K562 (cell line): ENCODE measurements at regions of chr9 and their contacts with region 1.

Region 1: GRCh38 chr9:136143216-136144001 is 24.7 kb upstream of the TMEM250 start:
- DNase-seq: peak; percentile 50 to 76 (median 60)
- ATAC-seq: peak; percentile 89
- H3K4me3 ChIP-seq: no peak overlapping the region
- H3K27ac ChIP-seq: no peak overlapping the region
- H3K4me1 ChIP-seq: peaks cover 0 to 38% of the 10 kb centered on the region in 2 experiments; a peak in 2 of 5 replicates
- H3K27me3 ChIP-seq: peaks cover 24 to 45% of the 10 kb centered on the region in 2 experiments; a peak in 4 of 5 replicates
- CTCF ChIP-seq: peak; percentile 72 to 77 (median 75)
- EP300 ChIP-seq: no peak
- POLR2A ChIP-seq: no peak
- RAD21 ChIP-seq: peak; percentile 54 to 82

Region 2: DNA sequence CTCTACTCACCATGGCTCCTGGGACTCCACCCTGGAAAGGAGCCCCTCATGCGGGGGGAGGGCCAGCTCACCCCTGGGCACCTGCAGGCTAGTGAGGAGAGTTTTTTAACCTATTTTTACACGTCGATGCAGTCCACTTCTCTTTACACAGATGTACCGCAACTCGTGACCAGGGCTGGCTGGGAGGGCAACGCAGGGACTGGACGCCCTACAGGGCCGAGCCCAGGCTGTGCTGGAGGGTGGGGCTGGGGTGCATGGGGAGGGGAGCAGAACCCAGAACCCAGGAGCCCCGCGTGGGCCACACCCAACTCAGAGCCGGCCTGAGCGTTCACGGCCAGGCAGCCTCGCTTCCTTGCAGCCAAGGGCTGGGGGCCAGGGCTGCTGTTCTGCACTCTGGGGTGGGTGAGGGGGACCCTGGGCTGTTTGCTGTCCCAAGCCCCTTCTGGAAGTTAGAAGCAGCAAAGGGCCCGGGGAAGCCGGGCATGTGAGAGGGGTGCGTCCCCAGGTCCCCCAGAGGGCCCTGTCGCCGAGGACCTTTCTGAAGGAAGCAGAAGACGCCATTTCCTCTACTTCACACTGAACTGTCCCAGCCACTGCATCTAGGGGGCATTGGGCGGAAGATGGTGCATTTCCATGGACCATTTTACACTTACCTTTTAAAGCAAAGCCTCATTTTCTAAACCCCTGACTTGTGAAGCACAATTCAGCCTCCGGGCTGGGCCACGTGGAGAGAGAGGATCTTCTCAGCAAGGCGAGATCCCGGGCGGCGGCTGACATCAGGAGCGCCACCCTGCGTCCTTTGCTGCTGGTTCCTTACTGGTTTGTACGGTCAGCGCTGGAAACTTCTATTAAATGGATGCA is 350.9 kb before region 1 on chr9:
- CTCF ChIA-PET with region 1: no interaction called
- POLR2A ChIA-PET with region 1: no interaction called
- in situ Hi-C with region 1: no loop called
- intact Hi-C with region 1: loop called (anchors 5 kb)
- DNase-seq: peak; percentile 65 to 71 (median 67)
- ATAC-seq: peak; percentile 73
- H3K4me3 ChIP-seq: no peak overlapping the region
- H3K27ac ChIP-seq: no peak overlapping the region
- H3K4me1 ChIP-seq: peaks cover 3 to 63% of the 10 kb centered on the region in 2 experiments; a peak in 3 of 5 replicates
- H3K27me3 ChIP-seq: peaks cover 31 to 73% of the 10 kb centered on the region in 2 experiments
- CTCF ChIP-seq: peak; percentile 58 to 74 (median 61)
- EP300 ChIP-seq: no peak
- POLR2A ChIP-seq: no peak
- RAD21 ChIP-seq: peak in 1 of 2 experiments; percentile 63; a peak in 2 of 4 replicates

Region 3: DNA sequence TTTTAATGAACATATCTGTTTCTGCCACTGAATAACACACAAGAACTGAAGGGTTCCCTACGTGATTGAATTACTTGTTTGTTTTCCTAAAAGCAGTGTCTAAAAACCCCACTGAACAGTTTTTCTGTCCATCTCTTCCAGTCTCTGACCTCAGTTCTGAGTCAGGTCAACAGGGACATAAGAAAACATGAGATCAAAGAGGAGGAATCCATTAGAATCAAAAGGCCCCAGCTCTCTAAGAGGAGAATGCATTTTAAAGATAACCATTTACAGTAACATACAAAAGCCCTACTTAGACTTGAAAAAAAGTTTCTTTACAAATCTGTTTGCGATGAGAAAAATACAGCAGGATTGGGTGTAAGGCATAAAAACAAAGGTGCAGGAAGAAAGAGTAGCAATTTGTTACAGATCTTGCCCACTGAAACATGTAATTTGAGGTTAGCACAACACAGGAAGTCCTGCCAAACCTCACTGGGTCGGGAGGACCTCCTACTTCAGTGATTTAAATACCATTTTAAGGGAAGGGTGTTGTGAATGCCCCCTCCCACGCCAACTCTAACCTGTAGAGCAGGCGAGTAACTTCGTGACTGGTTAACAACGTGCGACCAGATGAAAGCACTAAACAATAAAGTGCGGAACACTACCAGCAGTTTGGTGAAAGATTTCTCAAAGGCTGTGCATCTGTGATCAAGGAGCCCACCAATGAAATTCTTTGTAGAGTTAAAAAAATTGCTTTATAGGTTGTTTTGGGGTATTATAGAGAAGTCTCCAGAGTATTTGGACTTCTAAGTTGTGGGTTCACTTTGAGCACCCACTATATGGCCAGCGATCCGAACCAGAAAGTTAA is 100.9 kb after region 1 on chr9:
- CTCF ChIA-PET with region 1: no interaction called
- POLR2A ChIA-PET with region 1: no interaction called
- in situ Hi-C with region 1: no loop called
- intact Hi-C with region 1: no loop called
- DNase-seq: peak in 1 of 4 experiments; percentile 35
- ATAC-seq: no peak; the same call in 2 of the 3 replicates
- H3K4me3 ChIP-seq: peak overlapping the region; percentile 75
- H3K27ac ChIP-seq: peak overlapping the region; percentile 77
- H3K4me1 ChIP-seq: peaks cover 37 to 58% of the 10 kb centered on the region in 2 experiments
- H3K27me3 ChIP-seq: peaks cover under 1 to 26% of the 10 kb centered on the region in 2 experiments; a peak in 2 of 5 replicates
- CTCF ChIP-seq: no peak
- EP300 ChIP-seq: no peak
- POLR2A ChIP-seq: no peak
- RAD21 ChIP-seq: no peak

Region 4: DNA sequence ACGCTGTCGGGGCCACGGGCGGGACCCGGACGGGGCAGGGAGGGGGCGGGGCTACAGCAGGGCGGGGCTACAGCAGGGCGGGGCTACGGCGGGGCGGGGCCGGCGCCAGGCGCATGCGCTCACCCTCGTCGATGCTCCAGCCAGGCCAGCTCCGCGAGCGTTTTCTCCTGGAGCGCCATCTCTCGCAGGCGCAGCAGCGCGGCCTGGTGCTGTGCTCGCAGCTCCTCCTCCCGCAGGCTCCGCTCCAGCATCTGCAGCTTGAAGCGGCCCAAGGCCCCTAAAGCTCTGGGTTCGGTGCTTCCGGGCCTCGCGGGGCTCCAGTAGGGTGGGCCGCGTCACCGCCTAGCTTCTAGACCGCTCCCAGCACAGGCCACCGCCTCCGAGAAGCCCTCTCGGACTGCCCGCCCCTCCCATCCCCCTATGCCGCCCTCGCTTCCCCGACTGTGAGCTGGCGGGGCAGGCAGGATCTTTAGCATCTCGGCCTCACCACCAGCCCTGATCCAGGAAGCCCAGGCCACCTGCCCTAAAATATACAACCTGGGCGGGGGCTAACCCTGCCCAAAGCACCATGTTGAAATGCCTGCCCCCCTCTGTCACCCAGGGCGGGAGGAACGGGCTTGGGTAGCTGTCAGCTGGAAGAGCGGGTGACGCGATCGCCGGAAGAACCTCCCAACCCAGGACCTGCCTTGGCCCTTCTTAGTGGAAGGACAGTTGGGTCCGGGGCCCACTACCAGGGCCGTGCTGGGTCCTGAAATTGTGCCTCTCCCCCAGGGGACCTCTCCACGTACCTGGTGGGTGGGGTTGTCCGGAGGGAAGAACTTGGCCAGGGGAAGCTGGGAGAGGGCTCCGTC is 124.1 kb after region 1 on chr9:
- CTCF ChIA-PET with region 1: interaction called, 3 read pairs
- POLR2A ChIA-PET with region 1: no interaction called
- in situ Hi-C with region 1: no loop called
- intact Hi-C with region 1: loop called (anchors 5 kb)
- DNase-seq: peak; percentile 88 to 100 (median 99)
- ATAC-seq: peak; percentile 97
- H3K4me3 ChIP-seq: peak overlapping the region; percentile 37
- H3K27ac ChIP-seq: no peak overlapping the region
- H3K4me1 ChIP-seq: peaks cover 0 to 29% of the 10 kb centered on the region in 2 experiments; a peak in 3 of 5 replicates
- H3K27me3 ChIP-seq: peaks cover 16 to 35% of the 10 kb centered on the region in 2 experiments
- CTCF ChIP-seq: peak; percentile 44 to 76 (median 66)
- EP300 ChIP-seq: no peak
- POLR2A ChIP-seq: no peak
- RAD21 ChIP-seq: peak; percentile 40 to 72

Region 5: DNA sequence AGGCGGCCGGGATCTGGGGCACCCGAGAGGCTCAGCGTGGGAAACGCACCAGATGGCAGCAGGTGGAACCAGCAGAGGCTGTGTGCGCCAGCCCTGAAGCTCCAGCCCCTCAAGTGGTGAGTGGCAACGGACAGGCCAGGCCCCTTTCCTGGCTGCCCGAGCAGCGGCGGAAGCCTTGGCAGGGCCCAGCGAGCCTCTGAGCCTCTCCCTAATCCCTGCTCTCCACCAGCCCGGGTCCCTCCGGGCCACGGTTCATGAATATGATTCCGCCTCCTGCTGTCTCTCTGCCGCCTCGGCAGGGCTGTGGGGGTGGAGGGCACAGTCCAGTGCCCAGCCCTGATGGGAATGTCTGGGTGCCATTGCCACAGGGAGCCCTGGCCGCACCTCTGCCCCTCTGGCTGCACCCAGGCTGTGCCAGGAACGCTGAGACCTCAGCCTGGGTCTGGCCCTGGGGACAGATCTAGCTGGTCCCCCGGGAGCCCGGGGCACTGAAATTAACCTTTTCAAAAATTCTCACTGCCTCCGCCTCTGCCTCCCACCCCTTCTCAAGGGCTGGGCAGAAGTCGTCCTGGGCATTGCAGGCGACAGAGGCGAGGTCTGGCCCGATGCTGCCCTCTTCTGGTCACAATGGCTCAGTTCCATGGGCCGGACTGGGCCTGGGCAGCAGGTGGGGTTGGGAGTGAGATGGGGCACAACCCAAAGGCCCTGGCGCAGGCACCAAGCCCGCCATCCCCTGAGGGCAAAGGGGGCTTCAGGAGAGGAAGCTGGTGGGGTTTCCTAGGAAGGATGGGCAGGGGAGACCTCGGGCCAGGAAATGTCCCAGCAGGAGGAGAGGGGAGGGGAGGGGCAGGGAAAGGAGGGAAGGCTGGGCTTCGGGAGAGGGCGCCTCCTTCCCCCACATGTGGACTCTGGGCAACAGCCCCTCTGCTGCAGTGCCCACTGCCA is 140.2 kb after region 1 on chr9:
- CTCF ChIA-PET with region 1: interaction called, 10 read pairs
- POLR2A ChIA-PET with region 1: interaction called, 3 read pairs
- in situ Hi-C with region 1: no loop called
- intact Hi-C with region 1: loop called (anchors 1 kb)
- DNase-seq: peak; percentile 80 to 84 (median 82)
- ATAC-seq: peak; percentile 98
- H3K4me3 ChIP-seq: no peak overlapping the region
- H3K27ac ChIP-seq: no peak overlapping the region
- H3K4me1 ChIP-seq: peaks cover 0 to 51% of the 10 kb centered on the region in 2 experiments; a peak in 2 of 5 replicates
- H3K27me3 ChIP-seq: peaks cover 30 to 70% of the 10 kb centered on the region in 2 experiments; a peak in 4 of 5 replicates
- CTCF ChIP-seq: peak; percentile 86 to 94 (median 93)
- EP300 ChIP-seq: no peak
- POLR2A ChIP-seq: no peak
- RAD21 ChIP-seq: peak; percentile 89 to 95